ENCODE measurements at regions of chr1 and their contacts with region 1.

Region 1: DNA sequence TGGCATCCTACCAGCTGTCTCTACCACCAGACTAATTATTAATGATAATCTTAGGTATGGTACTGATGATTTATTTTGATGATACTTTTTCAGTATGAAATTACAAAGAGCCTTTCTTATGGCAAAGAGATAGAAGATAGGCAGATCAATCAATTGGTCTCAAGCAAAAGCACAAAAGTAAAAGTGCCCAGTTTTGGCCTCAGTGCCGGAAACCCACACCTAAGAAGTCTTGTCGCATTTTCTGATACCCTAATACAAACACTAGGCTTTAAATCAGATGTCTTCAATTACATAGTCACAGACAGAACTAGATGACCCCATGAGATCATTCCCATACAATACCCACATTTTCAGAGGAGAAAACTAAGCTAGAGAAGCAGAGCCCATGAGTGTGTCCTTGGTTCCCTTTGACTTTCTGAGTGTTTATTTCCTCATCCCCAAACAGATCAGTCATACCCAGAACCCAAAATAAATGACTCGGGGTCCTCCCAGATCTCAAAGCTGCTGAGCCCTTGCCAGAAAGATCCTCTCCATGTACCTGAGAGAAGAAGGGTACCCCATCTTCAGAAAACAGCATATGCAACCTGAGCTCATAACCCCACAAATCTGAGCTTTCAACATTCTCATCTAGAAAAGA is 7.7 kb downstream of the ITPKB start:
- DNase-seq: peak in 2 of 10 donors; percentile 32 to 34
- ATAC-seq: peak in 1 of 2 donors; percentile 8
- H3K4me3 Mint-ChIP-seq: peak overlapping the region; percentile 89 to 99 (median 95)
- H3K27ac Mint-ChIP-seq: peak overlapping the region; percentile 86 to 98 (median 96)
- H3K4me1 Mint-ChIP-seq: peaks cover 55 to 97% (median 82%) of the 10 kb centered on the region in 4 donors
- H3K27me3 Mint-ChIP-seq: no peaks in the 10 kb centered on the region

Region 2: DNA sequence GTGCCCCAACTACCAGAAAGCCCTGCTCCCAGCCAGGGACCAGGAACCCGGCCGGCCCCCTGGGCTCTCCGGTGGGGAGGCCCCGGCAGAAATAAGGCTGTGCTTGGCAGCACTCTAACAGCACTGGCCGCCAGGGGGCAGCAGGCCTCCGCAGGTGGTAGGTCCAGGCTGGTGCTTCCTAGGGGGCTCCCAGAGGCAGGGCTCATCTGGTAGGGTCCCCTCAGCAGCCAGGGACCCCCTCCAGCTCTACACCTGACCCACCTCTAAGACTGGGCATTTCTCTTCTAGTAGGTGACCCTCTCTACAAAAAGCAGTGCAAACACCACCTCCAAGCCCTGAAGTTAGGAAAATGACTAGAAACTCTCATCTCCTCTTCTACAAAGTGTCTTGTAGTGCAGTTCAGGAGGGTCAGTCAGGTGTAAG is 97.2 kb before region 1 on chr1:
- POLR2A ChIA-PET with region 1: interaction called, 13 read pairs
- DNase-seq: peak; percentile 64 to 89 (median 82)
- ATAC-seq: peak; percentile 65 to 85
- H3K4me3 Mint-ChIP-seq: peak overlapping the region; percentile 3 to 86 (median 56)
- H3K27ac Mint-ChIP-seq: peak overlapping the region; percentile 72 to 97 (median 90)
- H3K4me1 Mint-ChIP-seq: peaks cover 34 to 64% (median 57%) of the 10 kb centered on the region in 4 donors
- H3K27me3 Mint-ChIP-seq: no peaks in the 10 kb centered on the region

Region 3: GRCh38 chr1:226656601-226657277 is 74.6 kb before region 1 on chr1:
- POLR2A ChIA-PET with region 1: interaction called, 16 read pairs
- DNase-seq: peak in 9 of 10 donors; percentile 57 to 88 (median 84)
- ATAC-seq: peak; percentile 64 to 78
- H3K4me3 Mint-ChIP-seq: peak overlapping the region in 9 of 10 donors; percentile 47 to 92 (median 74)
- H3K27ac Mint-ChIP-seq: no peak overlapping the region
- H3K4me1 Mint-ChIP-seq: peaks cover 0 to 50% (median 0%) of the 10 kb centered on the region in 4 donors
- H3K27me3 Mint-ChIP-seq: no peaks in the 10 kb centered on the region

Region 4: GRCh38 chr1:226679853-226680516 is 51.4 kb before region 1 on chr1:
- POLR2A ChIA-PET with region 1: interaction called, 14 read pairs
- DNase-seq: peak; percentile 65 to 89 (median 76)
- ATAC-seq: peak; percentile 13 to 30
- H3K4me3 Mint-ChIP-seq: peak overlapping the region; percentile 75 to 97 (median 88)
- H3K27ac Mint-ChIP-seq: peak overlapping the region; percentile 99 to 100 (median 99)
- H3K4me1 Mint-ChIP-seq: peaks cover 70 to 100% (median 99%) of the 10 kb centered on the region in 4 donors
- H3K27me3 Mint-ChIP-seq: no peaks in the 10 kb centered on the region

Region 5: GRCh38 chr1:226749467-226749866 is 18.1 kb after region 1 on chr1:
- POLR2A ChIA-PET with region 1: no interaction called
- DNase-seq: no peak
- ATAC-seq: no peak
- H3K4me3 Mint-ChIP-seq: no peak overlapping the region
- H3K27ac Mint-ChIP-seq: no peak overlapping the region
- H3K4me1 Mint-ChIP-seq: peaks cover 13 to 30% (median 24%) of the 10 kb centered on the region in 4 donors
- H3K27me3 Mint-ChIP-seq: no peaks in the 10 kb centered on the region

Measured in naive thymus-derived CD8-positive, alpha-beta T cell (primary cell).